Activated B cell treated with CpG ODN at 0.5 μM for 24 hours (primary cell): ENCODE measurements at regions of chr17 and their contacts with region 1.

Region 1: DNA sequence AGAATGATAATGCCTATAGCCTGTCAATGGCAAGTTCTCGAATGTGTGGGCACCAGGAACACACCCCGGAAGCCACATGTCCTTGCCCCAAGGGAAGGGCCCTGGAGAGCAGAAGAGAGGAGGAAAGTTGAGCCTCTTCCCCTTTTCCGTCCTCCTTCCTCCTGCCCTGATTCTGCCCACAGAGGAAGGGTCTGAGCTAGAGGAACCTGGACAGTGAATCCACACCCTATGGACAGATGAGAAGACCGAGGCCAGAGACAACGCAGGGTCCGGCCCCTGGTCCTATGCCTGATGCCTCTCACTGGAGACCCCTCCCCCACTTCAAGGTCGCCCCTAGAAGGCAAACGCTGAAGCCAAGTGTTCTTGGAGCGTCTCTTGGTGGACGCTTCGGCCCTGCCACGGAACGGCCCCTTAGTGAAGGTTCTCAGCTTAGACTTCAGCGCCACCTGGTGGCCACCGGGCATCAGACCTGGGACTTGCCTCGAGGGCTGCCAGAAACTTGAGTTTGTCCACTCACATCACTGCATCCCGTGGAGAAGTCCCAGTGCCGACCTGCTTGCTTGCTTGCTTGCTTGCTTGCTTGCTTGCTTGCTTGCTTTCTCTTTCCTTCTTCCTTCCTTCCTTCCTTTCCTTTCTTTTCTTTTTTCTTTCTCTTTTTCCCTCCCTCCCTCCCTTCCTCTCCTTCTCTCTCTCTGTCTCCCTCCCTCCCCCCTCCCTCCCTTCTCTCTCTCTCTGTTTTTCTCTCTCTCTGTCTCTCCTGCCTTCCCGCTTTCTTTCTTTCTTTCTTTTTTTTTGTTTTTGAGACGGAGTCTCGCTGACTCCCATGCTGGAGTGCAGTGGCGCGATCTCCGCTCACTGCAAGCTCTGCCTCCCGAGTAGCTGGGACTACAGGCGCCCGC is 20.6 kb upstream of the SPNS3 start:
- DNase-seq: peak; percentile 89
- ATAC-seq: peak; percentile 97
- H3K4me3 Mint-ChIP-seq: peak overlapping the region; percentile 70
- H3K27ac Mint-ChIP-seq: peak overlapping the region; percentile 52
- H3K4me1 Mint-ChIP-seq: peaks cover 6% of the 10 kb centered on the region
- H3K27me3 Mint-ChIP-seq: no peaks in the 10 kb centered on the region
- CTCF ChIP-seq: peak; percentile 57

Region 2: DNA sequence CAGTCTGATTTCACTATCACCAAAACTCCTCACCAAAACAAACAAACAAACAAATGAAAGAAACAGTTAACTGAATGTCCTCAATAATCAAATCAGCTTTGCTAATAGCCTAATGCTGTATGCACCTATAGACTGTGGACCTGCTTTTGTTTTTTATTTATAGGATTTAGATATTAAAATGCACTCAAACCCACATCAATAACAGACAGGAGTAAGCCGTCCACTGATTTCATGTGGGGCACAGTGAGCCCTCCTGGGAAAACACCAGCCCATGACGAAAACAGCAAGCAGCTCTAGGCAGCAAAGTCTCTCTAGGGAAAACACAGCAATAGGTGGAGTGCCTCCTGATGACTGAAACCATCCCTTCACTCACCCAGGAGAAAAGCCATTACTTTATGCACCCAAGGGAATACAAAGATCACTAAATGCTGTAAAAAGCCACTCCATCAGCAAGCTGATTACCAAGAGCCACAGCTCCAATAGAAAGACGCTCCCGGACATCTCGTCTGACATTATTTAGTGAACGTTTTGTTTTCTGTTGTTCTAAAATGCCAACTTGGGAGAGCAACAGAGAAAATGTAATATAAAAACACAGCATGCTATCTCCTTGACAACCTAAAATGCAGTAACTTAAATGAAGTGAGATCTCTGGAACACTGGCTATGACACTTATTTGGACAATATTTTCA is 197.2 kb before region 1 on chr17:
- CTCF ChIA-PET with region 1: interaction called, 64 read pairs
- POLR2A ChIA-PET with region 1: no interaction called
- intact Hi-C with region 1: loop called (anchors 1 kb)
- DNase-seq: no peak
- ATAC-seq: peak; percentile 75
- H3K4me3 Mint-ChIP-seq: no peak overlapping the region
- H3K27ac Mint-ChIP-seq: peak overlapping the region; percentile 19
- H3K4me1 Mint-ChIP-seq: peaks cover 13% of the 10 kb centered on the region
- H3K27me3 Mint-ChIP-seq: no peaks in the 10 kb centered on the region
- CTCF ChIP-seq: no peak

Region 3: GRCh38 chr17:4304417-4305027 is 108.7 kb before region 1 on chr17:
- CTCF ChIA-PET with region 1: interaction called, 19 read pairs
- POLR2A ChIA-PET with region 1: no interaction called
- intact Hi-C with region 1: loop called (anchors 1 kb)
- DNase-seq: no peak
- ATAC-seq: peak; percentile 81
- H3K4me3 Mint-ChIP-seq: no peak overlapping the region
- H3K27ac Mint-ChIP-seq: no peak overlapping the region
- H3K4me1 Mint-ChIP-seq: peaks cover 20% of the 10 kb centered on the region
- H3K27me3 Mint-ChIP-seq: no peaks in the 10 kb centered on the region
- CTCF ChIP-seq: peak; percentile 53

Region 4: DNA sequence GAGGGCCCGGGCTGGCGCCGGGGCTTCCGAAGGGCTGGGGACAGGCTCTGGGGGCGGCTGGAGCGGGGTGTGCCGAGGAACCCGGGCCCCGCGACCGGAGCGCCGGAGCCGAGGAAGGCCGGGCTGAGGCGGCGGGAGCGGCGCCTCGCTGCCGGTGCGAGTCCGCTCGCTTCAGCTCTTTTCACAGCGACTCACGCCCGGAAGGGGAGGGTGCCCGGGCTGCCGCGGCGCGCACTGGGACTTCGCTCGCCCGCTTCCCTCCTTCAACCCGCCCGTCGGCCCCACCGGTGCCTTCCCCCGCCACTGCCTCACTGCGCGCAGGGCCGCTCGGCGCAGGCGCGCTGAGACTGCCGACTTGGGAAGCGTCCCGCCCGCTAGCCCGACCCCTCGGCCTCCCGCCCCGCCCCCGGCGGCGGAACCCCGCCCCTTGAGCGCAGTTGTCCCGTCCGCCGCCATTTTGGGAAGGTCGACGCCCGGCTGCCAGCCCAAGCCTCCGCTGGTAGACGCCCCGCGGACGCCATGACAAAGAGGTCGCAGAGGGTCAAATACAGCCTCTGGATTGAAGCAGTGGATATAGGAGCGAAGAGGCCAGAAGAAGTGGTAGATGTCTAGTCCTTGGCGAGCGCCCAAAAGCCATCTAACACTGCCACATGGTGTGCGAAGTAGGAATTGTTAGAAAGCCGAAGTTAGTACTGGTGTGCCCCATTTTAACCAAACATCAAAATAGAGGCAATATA is 46.7 kb before region 1 on chr17 and contains the start of gene UBE2G1:
- CTCF ChIA-PET with region 1: no interaction called
- POLR2A ChIA-PET with region 1: interaction called, 4 read pairs
- intact Hi-C with region 1: loop called (anchors 1 kb)
- DNase-seq: peak; percentile 99
- ATAC-seq: peak; percentile 81
- H3K4me3 Mint-ChIP-seq: peak within 1 kb of the TSS; percentile 86
- H3K27ac Mint-ChIP-seq: peak within 1 kb of the TSS; percentile 93
- H3K4me1 Mint-ChIP-seq: peaks cover 47% of the 10 kb centered on the region
- H3K27me3 Mint-ChIP-seq: no peaks in the 10 kb centered on the region
- CTCF ChIP-seq: no peak
- total RNA-seq, gene UBE2G1: 66.5 and 66.6 TPM in 2 replicates

Region 5: GRCh38 chr17:4394208-4395110 is 18.7 kb before region 1 on chr17:
- CTCF ChIA-PET with region 1: no interaction called
- POLR2A ChIA-PET with region 1: interaction called, 16 read pairs
- intact Hi-C with region 1: loop called (anchors 1 kb)
- DNase-seq: no peak
- ATAC-seq: no peak
- H3K4me3 Mint-ChIP-seq: peak overlapping the region; percentile 24
- H3K27ac Mint-ChIP-seq: peak overlapping the region; percentile 95
- H3K4me1 Mint-ChIP-seq: peaks cover 55% of the 10 kb centered on the region
- H3K27me3 Mint-ChIP-seq: no peaks in the 10 kb centered on the region
- CTCF ChIP-seq: no peak